Activated CD4-positive, alpha-beta T cell treated with anti-CD3 and anti-CD28 coated beads, Interleukin-2, amount 10 ng/mL, durations not matched to agents 7 days and 5 days (primary cell): ENCODE measurements at regions of chr19 and their contacts with region 1.

Region 1: GRCh38 chr19:20923077-20923871 is at the start of gene ZNF85:
- DNase-seq: peak; percentile 95
- H3K4me3 Mint-ChIP-seq: peak within 1 kb of the TSS; percentile 98
- H3K27ac Mint-ChIP-seq: peak within 1 kb of the TSS; percentile 100
- H3K4me1 Mint-ChIP-seq: peaks cover 28% of the 10 kb centered on the region
- H3K27me3 Mint-ChIP-seq: no peaks in the 10 kb centered on the region
- total RNA-seq, gene ZNF85: 20.6 to 24.2 TPM

Region 2: GRCh38 chr19:20776083-20777076 is 146.9 kb before region 1 on chr19 and contains the start of gene ZNF66:
- CTCF ChIA-PET with region 1: interaction called, 3 read pairs
- POLR2A ChIA-PET with region 1: interaction called, 10 read pairs
- DNase-seq: peak; percentile 96
- H3K4me3 Mint-ChIP-seq: peak within 1 kb of the TSS; percentile 99
- H3K27ac Mint-ChIP-seq: peak within 1 kb of the TSS; percentile 98
- H3K4me1 Mint-ChIP-seq: peaks cover 10% of the 10 kb centered on the region
- H3K27me3 Mint-ChIP-seq: no peaks in the 10 kb centered on the region
- total RNA-seq, gene ZNF66: 11.8 to 14.0 TPM

Region 3: DNA sequence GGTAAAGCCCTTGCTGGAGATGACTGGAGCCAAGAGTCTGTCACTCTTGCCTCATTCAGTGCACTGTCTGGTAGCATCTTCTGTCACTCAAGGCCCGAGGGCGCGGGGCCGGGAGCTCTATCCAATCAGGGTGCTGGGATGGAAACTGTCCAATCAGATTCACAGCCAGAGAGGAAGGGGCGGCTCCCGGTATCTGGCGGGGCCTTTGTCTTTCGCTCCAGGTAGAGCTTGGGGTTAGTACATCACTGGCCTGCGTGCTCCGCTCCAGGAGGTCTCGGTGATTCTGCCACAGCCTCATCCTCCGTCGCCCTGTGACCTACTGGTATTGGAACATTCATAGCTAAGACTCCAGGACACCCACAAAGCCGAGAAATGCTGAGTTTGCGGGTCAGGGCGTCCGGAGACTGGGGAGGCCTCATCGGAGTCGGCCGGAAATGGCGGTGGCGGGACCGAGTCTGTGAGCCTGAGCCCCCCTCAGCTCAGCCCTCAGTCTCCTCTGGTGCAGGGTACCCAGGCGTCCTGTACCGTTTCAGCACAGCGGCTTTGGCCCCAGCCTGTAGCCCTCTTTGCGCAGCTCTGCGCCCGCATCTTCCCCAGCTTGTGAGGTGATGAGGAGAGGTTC is 76.6 kb after region 1 on chr19:
- CTCF ChIA-PET with region 1: no interaction called
- POLR2A ChIA-PET with region 1: interaction called, 11 read pairs
- DNase-seq: peak; percentile 93
- H3K4me3 Mint-ChIP-seq: peak overlapping the region; percentile 92
- H3K27ac Mint-ChIP-seq: peak overlapping the region; percentile 94
- H3K4me1 Mint-ChIP-seq: peaks cover 23% of the 10 kb centered on the region
- H3K27me3 Mint-ChIP-seq: no peaks in the 10 kb centered on the region